Dendritic cell treated with granulocyte-macrophage colony-stimulating factor and Interleukin-4, amounts not matched to agents 40 ng/mL and 50 ng/mL, for 4 days (primary cell): ENCODE measurements at regions of chr18 and their contacts with region 1.

Region 1: GRCh38 chr18:2104620-2105462 is 466.5 kb downstream of the METTL4 start:
- H3K4me3 Mint-ChIP-seq: no peak overlapping the region
- H3K27ac Mint-ChIP-seq: no peak overlapping the region
- H3K4me1 Mint-ChIP-seq: peaks cover 6% of the 10 kb centered on the region
- H3K27me3 Mint-ChIP-seq: no peaks in the 10 kb centered on the region

Region 2: DNA sequence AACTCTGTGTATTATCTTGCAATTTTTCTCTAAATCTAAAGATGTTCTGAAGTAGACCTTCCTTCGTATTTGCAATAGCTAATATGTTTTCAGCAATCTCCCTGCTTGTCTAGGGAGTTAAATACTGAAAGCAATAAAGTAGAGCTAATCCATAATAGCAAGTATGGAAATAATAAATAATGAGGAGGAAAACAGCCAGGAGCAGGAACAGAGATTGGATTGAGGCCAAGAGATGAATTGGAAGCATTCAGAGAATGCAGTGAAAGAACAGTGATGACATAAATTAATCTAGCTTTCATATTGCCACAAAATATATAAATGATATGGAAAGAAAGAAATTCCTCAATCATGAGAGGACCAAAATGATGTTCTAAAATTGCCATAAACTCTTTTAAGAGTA is 213.2 kb before region 1 on chr18:
- intact Hi-C with region 1: no loop called
- H3K4me3 Mint-ChIP-seq: no peak overlapping the region
- H3K27ac Mint-ChIP-seq: no peak overlapping the region
- H3K4me1 Mint-ChIP-seq: no peaks in the 10 kb centered on the region
- H3K27me3 Mint-ChIP-seq: no peaks in the 10 kb centered on the region

Region 3: DNA sequence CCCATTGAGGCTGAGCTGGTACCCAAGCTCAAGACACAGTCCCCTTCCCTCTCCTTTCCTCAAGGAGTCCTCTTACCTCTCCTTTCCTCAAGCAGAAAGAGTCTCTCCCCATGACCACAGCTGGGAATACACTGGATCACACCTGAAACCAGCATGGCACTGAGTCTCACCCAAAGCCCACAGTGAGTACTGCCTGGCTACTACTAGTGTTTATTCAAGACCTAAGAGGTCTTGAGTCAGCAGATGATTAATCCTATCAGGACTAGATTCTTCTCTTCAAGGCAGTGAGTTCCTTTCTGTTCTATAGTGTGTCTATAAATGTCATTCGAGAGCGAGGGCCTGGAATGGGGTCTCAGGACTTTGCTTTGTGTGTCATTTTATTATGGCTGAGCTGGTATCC is 355.0 kb after region 1 on chr18:
- intact Hi-C with region 1: loop called (anchors 10 kb)
- H3K4me3 Mint-ChIP-seq: no peak overlapping the region
- H3K27ac Mint-ChIP-seq: no peak overlapping the region
- H3K4me1 Mint-ChIP-seq: no peaks in the 10 kb centered on the region
- H3K27me3 Mint-ChIP-seq: peaks cover 5% of the 10 kb centered on the region

Region 4: DNA sequence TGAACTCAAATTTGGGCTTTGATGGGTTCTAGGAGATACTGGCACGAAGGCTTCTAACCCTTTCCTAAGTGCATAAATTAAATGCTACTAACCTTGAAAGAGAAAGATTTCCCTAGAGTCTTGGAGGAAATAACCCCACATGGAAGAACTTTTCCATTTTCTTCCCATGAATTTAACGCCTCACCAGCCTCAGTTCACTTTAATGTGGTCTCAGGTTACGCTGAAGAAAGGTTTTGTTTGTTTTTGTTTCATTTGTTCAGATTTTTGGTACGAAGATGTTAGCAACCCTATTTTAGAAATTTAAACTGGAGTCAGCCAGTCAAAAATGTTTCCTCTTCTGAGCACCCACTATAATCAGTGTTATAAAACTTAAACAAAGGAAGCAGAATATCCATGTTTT is 435.7 kb after region 1 on chr18:
- intact Hi-C with region 1: loop called (anchors 2 kb)
- H3K4me3 Mint-ChIP-seq: no peak overlapping the region
- H3K27ac Mint-ChIP-seq: no peak overlapping the region
- H3K4me1 Mint-ChIP-seq: no peaks in the 10 kb centered on the region
- H3K27me3 Mint-ChIP-seq: no peaks in the 10 kb centered on the region